Caco-2 (cell line): ENCODE measurements at regions of chr10 and their contacts with region 1.

Region 1: GRCh38 chr10:31836569-31837406 is 91.8 kb downstream of the ARHGAP12 start:
- DNase-seq: peak in 1 of 2 experiments; percentile 62
- H3K4me3 ChIP-seq: no peak overlapping the region
- H3K4me3 Mint-ChIP-seq: no peak overlapping the region
- H3K27ac Mint-ChIP-seq: no peak overlapping the region
- H3K4me1 ChIP-seq: no peaks in the 10 kb centered on the region
- H3K4me1 Mint-ChIP-seq: no peaks in the 10 kb centered on the region
- H3K27me3 ChIP-seq: no peaks in the 10 kb centered on the region
- H3K27me3 Mint-ChIP-seq: no peaks in the 10 kb centered on the region
- CTCF ChIP-seq: peak; percentile 84 to 94

Region 2: DNA sequence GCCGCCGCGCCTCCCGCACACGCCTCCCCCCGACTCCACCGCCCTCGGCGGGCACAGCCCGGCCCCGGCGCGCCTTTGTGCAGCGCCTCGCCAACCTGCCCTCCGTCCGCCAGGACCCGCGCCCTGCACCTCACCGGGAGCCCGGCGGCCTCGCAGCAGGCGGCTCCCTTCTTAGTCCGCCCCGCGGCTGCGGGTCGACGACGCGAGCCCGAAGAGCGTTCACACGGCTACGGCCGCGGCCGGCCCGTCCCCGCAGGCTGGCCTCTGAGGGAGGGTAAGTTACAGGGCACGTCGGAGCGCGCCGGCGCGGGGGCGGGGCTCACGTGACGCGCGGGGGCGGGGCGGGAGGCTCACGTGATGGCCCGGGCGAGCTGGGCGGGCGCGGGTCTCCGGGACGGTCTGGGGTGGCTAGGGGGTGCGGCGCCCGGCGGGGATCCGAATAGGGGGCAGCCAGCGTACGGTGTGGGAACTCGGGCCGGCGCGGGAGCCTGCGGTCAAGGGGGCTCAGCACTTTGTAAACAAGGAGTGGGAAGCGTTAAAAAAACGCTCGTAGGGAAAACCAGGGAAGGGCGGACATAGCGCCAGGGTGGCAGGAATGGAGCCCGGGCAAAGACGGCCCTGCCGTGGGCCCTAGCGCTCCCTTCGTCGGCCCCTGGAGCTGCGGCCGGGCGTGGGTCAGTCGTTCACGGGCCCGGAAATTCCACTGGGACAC is 91.9 kb after region 1 on chr10 and contains the start of gene ARHGAP12:
- CTCF ChIA-PET with region 1: no interaction called
- POLR2A ChIA-PET with region 1: no interaction called
- intact Hi-C with region 1: no loop called
- DNase-seq: peak; percentile 95 to 99
- H3K4me3 ChIP-seq: peak within 1 kb of the TSS; percentile 80
- H3K4me3 Mint-ChIP-seq: peak within 1 kb of the TSS; percentile 76
- H3K27ac Mint-ChIP-seq: peak within 1 kb of the TSS; percentile 97
- H3K4me1 ChIP-seq: peaks cover 12% of the 10 kb centered on the region; the same call in 1 of the 2 replicates
- H3K4me1 Mint-ChIP-seq: peaks cover 40% of the 10 kb centered on the region
- H3K27me3 ChIP-seq: no peaks in the 10 kb centered on the region
- H3K27me3 Mint-ChIP-seq: no peaks in the 10 kb centered on the region
- CTCF ChIP-seq: no peak
- total RNA-seq, gene ARHGAP12: 62.3 and 63.1 TPM in 2 replicates

Region 3: GRCh38 chr10:31947144-31947926 is 110.5 kb after region 1 on chr10:
- CTCF ChIA-PET with region 1: interaction called, 3 read pairs
- POLR2A ChIA-PET with region 1: no interaction called
- intact Hi-C with region 1: loop called (anchors 1 kb)
- DNase-seq: peak; percentile 74 to 84
- H3K4me3 ChIP-seq: peak overlapping the region; percentile 10
- H3K4me3 Mint-ChIP-seq: peak overlapping the region; percentile 65
- H3K27ac Mint-ChIP-seq: peak overlapping the region; percentile 70
- H3K4me1 ChIP-seq: peaks cover 42% of the 10 kb centered on the region
- H3K4me1 Mint-ChIP-seq: peaks cover 26% of the 10 kb centered on the region
- H3K27me3 ChIP-seq: no peaks in the 10 kb centered on the region
- H3K27me3 Mint-ChIP-seq: no peaks in the 10 kb centered on the region
- CTCF ChIP-seq: peak; percentile 47 to 82

Region 4: DNA sequence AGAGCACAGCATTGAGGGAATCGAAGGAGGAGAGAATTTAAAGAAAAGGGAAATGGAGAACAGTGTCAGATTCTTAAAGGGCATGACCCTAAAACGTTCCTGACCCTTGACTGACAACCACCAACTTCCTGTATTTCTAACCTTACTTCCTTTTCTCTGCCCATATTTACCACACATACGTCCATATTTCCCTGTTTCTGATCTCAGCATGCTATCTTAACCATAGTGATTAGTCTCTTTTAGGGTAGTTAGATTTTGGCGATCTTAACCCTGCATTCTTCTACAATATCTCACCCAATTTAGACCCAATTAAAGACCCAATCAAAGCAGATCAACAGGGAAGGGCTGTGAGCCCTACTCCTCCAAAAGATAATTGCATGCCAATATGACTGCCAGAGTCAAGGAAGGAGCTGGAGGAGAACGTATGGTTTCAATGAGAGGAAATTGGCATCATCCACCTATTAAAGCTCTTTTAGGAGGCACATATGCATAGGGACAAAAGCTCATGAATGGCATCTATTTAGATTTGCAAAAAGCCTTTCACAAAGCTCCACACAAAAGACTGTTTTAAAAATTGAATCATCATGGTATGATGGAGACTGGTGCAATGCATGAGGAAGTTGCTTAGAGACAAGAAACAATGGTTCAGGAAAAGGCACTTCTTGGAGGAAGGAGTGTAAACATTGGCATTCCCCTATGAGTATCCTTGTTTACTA is 140.8 kb after region 1 on chr10:
- CTCF ChIA-PET with region 1: no interaction called
- POLR2A ChIA-PET with region 1: no interaction called
- intact Hi-C with region 1: no loop called
- DNase-seq: no peak
- H3K4me3 ChIP-seq: no peak overlapping the region
- H3K4me3 Mint-ChIP-seq: no peak overlapping the region
- H3K27ac Mint-ChIP-seq: no peak overlapping the region
- H3K4me1 ChIP-seq: no peaks in the 10 kb centered on the region
- H3K4me1 Mint-ChIP-seq: peaks cover 9% of the 10 kb centered on the region
- H3K27me3 ChIP-seq: no peaks in the 10 kb centered on the region
- H3K27me3 Mint-ChIP-seq: no peaks in the 10 kb centered on the region
- CTCF ChIP-seq: no peak

Region 5: DNA sequence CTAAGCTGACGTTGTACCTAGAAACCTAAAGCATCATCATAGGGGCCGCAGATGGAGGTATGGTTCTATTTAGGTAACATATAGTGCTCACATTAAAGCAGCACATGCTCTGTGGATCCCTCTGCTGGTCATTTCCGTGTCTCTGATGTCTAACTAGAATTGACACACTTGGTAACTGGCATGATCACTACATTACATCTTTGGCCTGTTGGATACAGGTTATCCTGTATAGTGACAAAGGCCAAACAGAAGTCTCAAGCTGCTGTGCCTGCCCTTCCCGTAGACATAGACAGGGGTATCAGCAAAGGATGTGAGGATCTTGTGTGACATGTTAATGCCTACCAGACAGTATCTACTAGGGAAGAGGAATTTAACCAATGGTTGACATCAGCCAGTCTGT is 168.3 kb after region 1 on chr10:
- CTCF ChIA-PET with region 1: no interaction called
- POLR2A ChIA-PET with region 1: no interaction called
- intact Hi-C with region 1: loop called (anchors 1 kb)
- DNase-seq: peak; percentile 68 to 73
- H3K4me3 ChIP-seq: no peak overlapping the region
- H3K4me3 Mint-ChIP-seq: no peak overlapping the region
- H3K27ac Mint-ChIP-seq: no peak overlapping the region
- H3K4me1 ChIP-seq: no peaks in the 10 kb centered on the region; the same call in 1 of the 2 replicates
- H3K4me1 Mint-ChIP-seq: peaks cover 21% of the 10 kb centered on the region
- H3K27me3 ChIP-seq: no peaks in the 10 kb centered on the region
- H3K27me3 Mint-ChIP-seq: no peaks in the 10 kb centered on the region
- CTCF ChIP-seq: peak; percentile 78 to 83

Region 6: DNA sequence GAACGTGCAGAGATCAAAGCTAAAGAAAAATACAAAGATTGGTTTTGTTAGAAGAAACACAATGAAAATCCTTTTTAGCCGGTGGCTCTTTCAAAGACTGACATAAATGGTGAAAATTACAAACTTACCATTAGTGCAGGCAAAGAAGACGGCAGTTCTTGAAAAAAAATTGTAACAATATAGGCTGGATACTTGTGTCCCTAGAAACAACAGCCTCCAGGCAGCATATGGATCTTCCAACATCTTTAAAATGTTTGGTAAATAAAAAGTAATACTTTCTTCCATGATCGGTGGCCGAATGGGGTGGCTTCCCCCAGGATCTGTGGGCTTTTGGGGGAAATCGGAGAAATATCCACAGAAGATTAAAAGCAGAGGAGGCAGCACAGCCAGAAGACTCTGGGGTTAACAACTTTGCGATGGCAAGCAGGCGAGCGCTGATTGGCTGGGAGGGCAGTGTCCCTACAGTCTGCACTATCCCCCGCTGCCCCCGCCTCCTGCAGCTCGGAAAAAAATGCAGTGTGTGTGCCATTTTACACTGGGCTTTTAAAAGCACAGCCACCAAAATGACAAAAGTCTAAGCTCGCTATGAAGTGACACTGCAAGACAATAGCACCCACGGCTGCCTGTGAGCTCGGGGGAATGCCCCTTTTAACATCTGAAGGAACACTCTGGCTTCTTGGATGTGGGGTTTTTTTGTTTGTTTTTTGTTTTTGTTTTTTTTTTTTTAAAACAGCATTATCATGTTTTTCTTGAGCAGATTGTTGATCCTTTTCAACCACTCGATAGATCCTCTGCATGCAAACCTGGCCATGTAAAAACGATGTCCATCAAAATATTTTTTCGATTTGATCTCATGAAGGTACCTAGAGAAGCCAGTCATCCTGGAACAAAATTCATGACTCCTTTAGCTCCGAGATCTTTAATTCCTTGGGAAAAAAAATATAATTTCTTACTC is 541.9 kb after region 1 on chr10:
- CTCF ChIA-PET with region 1: no interaction called
- POLR2A ChIA-PET with region 1: no interaction called
- intact Hi-C with region 1: loop called (anchors 10 kb)
- DNase-seq: peak; percentile 93 to 95
- H3K4me3 ChIP-seq: peak overlapping the region; percentile 70
- H3K4me3 Mint-ChIP-seq: no peak overlapping the region
- H3K27ac Mint-ChIP-seq: no peak overlapping the region
- H3K4me1 ChIP-seq: peaks cover 5% of the 10 kb centered on the region; the same call in 1 of the 2 replicates
- H3K4me1 Mint-ChIP-seq: no peaks in the 10 kb centered on the region
- H3K27me3 ChIP-seq: no peaks in the 10 kb centered on the region
- H3K27me3 Mint-ChIP-seq: no peaks in the 10 kb centered on the region
- CTCF ChIP-seq: no peak